Activated CD4-positive, alpha-beta memory T cell treated with anti-CD3 and anti-CD28 coated beads for 36 hours (primary cell): ENCODE measurements at regions of chr3 and their contacts with region 1.

Region 1: GRCh38 chr3:119240591-119241434 is at the start of gene B4GALT4:
- DNase-seq: peak; percentile 81
- H3K4me3 Mint-ChIP-seq: peak within 1 kb of the TSS; percentile 81
- H3K27ac Mint-ChIP-seq: peak within 1 kb of the TSS; percentile 86
- H3K4me1 Mint-ChIP-seq: peaks cover 31% of the 10 kb centered on the region
- H3K27me3 Mint-ChIP-seq: no peaks in the 10 kb centered on the region
- total RNA-seq, gene B4GALT4: 13.5 to 14.2 TPM

Region 2: GRCh38 chr3:119034256-119035013 is 206.4 kb before region 1 on chr3 and contains the start of gene IGSF11:
- CTCF ChIA-PET with region 1: interaction called, 14 read pairs
- POLR2A ChIA-PET with region 1: no interaction called
- intact Hi-C with region 1: loop called (anchors 2 kb)
- DNase-seq: peak; percentile 71
- H3K4me3 Mint-ChIP-seq: peak within 1 kb of the TSS; percentile 80
- H3K27ac Mint-ChIP-seq: no peak within 1 kb of the TSS
- H3K4me1 Mint-ChIP-seq: peaks cover 4% of the 10 kb centered on the region
- H3K27me3 Mint-ChIP-seq: peaks cover 38% of the 10 kb centered on the region
- total RNA-seq, gene IGSF11: 0.14 to 0.15 TPM

Region 3: DNA sequence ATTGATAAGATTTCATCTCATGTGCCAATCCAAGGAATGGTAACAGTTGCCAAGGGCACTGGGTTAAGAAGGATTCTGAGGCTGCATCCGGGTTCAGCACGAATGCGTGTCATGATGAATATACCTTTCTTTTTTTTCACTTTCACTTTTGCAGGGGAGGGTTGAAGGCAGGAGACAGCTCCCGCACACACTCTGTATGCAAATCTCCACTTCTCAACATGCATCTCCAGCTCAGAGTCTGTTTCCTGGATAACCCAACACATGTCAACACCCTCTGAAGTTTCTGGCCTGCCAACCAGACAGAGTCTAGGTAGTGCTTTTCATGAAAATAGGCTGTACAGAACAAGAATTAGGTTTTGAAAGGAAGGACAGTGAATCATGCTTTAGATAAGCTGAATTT is 21.7 kb before region 1 on chr3:
- CTCF ChIA-PET with region 1: interaction called, 21 read pairs
- POLR2A ChIA-PET with region 1: no interaction called
- intact Hi-C with region 1: loop called (anchors 1 kb)
- DNase-seq: peak; percentile 58
- H3K4me3 Mint-ChIP-seq: peak overlapping the region; percentile 33
- H3K27ac Mint-ChIP-seq: peak overlapping the region; percentile 77
- H3K4me1 Mint-ChIP-seq: peaks cover 34% of the 10 kb centered on the region
- H3K27me3 Mint-ChIP-seq: no peaks in the 10 kb centered on the region

Region 4: DNA sequence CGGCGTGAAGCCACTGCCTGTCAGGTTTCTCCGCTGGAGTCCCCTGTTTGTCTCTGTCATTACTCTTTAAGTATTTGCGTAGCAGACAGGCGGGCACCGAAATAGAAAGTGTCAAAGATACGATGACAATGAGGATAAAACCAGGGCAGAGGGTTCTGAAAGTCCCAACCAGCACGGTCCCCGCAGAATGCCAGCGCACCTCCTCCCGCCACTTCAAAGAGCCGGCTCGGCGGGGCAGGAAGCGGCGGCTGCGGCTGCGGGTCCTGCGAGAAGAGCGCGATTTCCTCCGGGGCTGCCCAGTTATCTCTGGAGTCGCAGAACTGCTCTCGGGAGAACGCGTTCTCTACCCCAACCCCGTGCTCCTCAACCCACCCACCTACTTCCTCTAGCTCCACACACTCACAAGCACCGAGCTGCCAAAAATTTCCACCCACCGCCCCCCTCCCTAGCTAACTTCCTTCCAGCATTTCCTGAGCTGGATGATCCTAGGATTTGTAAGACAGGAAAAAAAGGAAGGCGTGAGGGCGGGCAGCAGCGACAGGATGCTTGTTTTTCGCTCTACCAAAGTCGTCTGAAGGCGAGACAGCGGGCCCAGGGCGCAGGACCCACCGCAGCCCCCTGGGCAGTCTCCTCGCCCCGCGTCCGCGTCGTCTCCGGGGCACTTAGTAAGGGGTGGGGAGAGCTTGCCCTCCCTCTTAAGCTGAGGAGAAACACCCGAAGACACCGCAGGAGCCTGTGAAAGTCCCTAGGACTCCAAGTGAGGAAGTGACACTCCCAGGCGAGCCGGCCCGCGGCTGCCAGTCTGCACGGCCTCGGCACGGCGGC is 53.3 kb after region 1 on chr3 and contains the start of gene ARHGAP31:
- CTCF ChIA-PET with region 1: interaction called, 29 read pairs
- POLR2A ChIA-PET with region 1: interaction called, 7 read pairs
- intact Hi-C with region 1: loop called (anchors 1 kb)
- DNase-seq: peak; percentile 95
- H3K4me3 Mint-ChIP-seq: peak within 1 kb of the TSS; percentile 83
- H3K27ac Mint-ChIP-seq: peak within 1 kb of the TSS; percentile 93
- H3K4me1 Mint-ChIP-seq: peaks cover 44% of the 10 kb centered on the region
- H3K27me3 Mint-ChIP-seq: no peaks in the 10 kb centered on the region
- total RNA-seq, gene ARHGAP31: 10.8 to 11.4 TPM

Region 5: DNA sequence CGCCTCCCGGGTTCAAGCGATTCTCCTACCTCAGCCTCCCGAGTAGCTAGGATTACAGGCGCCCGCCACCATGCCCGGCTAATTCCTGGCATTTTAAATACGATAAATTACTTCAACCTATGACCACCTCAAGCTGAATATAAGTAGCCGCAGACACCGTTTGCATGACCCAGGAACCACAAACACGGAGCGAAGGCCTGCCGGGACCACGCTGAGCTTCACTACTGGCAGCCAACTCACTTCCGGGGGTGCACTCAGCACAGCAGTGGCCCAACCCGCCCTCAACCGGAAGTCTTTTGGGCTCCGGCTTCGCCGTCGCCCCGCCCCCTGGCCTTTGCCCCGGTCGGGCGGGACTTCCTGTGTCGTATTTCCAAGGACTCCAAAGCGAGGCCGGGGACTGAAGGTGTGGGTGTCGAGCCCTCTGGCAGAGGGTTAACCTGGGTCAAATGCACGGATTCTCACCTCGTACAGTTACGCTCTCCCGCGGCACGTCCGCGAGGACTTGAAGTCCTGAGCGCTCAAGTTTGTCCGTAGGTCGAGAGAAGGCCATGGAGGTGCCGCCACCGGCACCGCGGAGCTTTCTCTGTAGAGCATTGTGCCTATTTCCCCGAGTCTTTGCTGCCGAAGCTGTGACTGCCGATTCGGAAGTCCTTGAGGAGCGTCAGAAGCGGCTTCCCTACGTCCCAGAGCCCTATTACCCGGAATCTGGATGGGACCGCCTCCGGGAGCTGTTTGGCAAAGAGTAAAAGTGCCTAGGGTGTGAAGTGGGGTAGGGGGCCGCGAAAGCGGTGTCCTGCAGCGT is 257.6 kb after region 1 on chr3 and contains the start of gene TIMMDC1:
- CTCF ChIA-PET with region 1: interaction called, 4 read pairs
- POLR2A ChIA-PET with region 1: no interaction called
- intact Hi-C with region 1: loop called (anchors 2 kb)
- DNase-seq: peak; percentile 98
- H3K4me3 Mint-ChIP-seq: peak within 1 kb of the TSS; percentile 98
- H3K27ac Mint-ChIP-seq: peak within 1 kb of the TSS; percentile 96
- H3K4me1 Mint-ChIP-seq: peaks cover 29% of the 10 kb centered on the region
- H3K27me3 Mint-ChIP-seq: no peaks in the 10 kb centered on the region
- total RNA-seq, gene TIMMDC1: 93.7 to 105 TPM